ENCODE measurements at regions of chr2 and their contacts with region 1.

Region 1: DNA sequence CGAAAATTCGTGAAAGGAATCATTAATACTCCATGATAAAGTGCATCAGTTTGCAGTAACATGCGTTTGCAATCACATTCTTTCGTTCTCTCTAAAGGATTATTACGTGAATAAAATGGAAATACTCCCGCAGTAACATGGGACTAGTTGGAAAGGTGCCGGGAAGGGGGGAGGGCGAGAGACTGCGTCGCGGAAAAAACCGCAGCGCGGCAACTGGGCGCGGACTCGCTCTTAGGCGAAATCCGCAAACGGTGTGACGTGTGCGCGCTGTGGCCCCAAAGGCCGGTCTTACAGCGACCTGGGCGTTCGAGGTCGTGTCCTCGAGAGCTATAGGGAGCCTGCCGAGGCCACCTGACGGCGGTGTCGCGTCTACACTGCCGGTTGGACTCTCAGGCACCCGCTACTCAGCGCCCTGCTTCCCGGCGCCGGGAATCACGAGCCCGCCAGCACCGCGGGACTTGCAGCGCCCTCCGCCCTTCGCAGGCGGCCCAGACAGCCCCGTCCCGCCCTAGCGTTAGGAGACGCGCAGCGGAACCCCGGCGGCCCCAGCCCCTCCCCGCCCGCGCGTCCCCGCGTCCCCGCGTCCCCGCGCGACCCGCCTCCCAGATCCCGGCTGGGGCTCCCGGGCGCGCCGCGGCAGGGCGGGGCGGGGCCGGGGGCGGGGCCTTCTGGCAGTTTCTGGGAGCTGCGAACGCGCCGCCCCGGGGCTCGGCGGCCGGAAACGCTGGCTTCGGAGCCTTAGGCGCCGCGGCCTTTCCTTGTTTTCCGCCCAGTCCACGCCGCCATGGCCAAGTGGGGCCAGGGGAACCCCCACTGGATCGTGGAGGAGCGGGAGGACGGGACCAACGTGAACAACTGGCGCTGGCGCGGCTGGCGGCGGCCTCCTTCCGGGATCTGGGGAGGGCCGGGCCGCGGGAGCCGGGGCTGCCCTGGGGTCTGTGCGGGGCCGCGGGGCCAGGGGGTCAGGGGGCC is 15.1 kb downstream of the C2orf74 start:
- DNase-seq: peak; percentile 92
- H3K4me3 Mint-ChIP-seq: peak overlapping the region; percentile 92
- H3K27ac Mint-ChIP-seq: peak overlapping the region; percentile 83
- H3K4me1 Mint-ChIP-seq: peaks cover 43% of the 10 kb centered on the region
- H3K27me3 Mint-ChIP-seq: peaks cover 6% of the 10 kb centered on the region

Region 2: GRCh38 chr2:60756191-60757041 is 420.6 kb before region 1 on chr2 and contains the start of gene PAPOLG:
- intact Hi-C with region 1: loop called (anchors 2 kb)
- DNase-seq: peak; percentile 94
- H3K4me3 Mint-ChIP-seq: peak within 1 kb of the TSS; percentile 96
- H3K27ac Mint-ChIP-seq: peak within 1 kb of the TSS; percentile 96
- H3K4me1 Mint-ChIP-seq: peaks cover 29% of the 10 kb centered on the region
- H3K27me3 Mint-ChIP-seq: no peaks in the 10 kb centered on the region
- total RNA-seq, gene PAPOLG: 20.4 and 21.2 TPM in 2 replicates

Region 3: DNA sequence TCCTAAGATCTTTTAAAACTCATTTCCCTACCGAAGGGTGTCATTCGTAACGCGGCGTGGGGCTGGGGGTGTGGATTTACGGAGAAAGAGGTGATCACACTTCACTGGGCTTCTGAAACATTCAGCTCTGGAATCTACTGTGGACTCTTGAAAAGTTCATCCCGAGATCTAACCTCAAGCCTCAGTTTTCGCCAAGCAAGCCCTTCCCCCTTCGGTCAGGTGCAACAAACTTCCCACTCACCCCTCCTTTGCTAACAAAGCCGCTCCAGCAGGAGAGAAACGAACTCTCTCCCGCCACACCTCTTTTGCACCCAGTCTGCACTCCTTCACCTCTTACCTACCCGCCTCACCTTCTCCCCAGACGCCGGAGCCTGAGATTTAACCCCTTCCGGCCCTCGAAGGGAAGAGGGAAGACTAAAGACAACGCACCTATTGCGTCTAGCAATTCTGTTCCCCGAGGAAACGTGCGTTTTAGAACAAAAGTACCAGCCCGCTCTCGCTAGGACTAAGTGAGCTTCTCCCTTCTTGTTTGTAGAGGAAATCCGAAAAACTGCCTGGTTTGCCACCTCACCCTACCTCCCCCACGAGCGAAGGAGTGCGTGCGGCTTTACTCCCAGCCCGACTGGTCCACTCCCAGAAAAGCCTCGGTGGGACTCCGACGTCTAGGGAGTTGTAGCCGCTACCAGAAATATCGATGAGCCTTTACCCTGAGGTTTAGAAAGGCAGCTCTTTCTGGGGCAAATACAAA is 160.1 kb before region 1 on chr2:
- intact Hi-C with region 1: loop called (anchors 1 kb)
- DNase-seq: peak; percentile 69
- H3K4me3 Mint-ChIP-seq: peak overlapping the region; percentile 98
- H3K27ac Mint-ChIP-seq: peak overlapping the region; percentile 98
- H3K4me1 Mint-ChIP-seq: peaks cover 39% of the 10 kb centered on the region
- H3K27me3 Mint-ChIP-seq: no peaks in the 10 kb centered on the region

Region 4: DNA sequence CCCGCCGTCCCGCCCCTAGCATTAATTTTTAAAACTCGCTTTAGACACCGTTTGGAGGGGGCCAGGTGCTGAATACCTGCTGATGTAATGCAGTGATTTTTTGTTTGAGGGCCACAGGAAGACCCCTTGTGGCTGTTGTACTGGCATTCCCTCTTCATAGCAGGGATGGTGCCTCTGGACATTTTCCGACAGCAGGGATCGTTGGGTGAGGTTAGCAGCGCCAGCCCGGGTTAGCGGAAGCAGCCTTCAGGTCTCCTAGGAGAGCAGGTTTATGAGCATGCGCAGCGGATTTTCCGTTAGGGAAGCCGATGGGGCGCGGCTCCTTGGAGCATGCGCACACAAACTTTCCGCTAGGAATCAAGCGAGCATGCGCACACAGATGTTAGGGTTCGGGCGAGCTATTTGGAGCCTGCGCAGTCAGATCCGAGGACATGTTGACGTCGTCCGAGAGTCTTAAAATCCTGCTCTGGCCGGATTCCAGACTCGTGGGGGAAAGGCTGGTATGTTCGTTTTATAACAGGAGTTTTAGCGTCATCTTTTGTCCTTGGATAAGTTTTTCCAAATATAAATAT is 32.3 kb before region 1 on chr2:
- intact Hi-C with region 1: loop called (anchors 1 kb)
- DNase-seq: peak; percentile 92
- H3K4me3 Mint-ChIP-seq: peak overlapping the region; percentile 86
- H3K27ac Mint-ChIP-seq: peak overlapping the region; percentile 88
- H3K4me1 Mint-ChIP-seq: peaks cover 2% of the 10 kb centered on the region
- H3K27me3 Mint-ChIP-seq: no peaks in the 10 kb centered on the region

Region 5: GRCh38 chr2:61204781-61205531 is 27.9 kb after region 1 on chr2:
- intact Hi-C with region 1: no loop called
- DNase-seq: no peak
- H3K4me3 Mint-ChIP-seq: no peak overlapping the region
- H3K27ac Mint-ChIP-seq: no peak overlapping the region
- H3K4me1 Mint-ChIP-seq: no peaks in the 10 kb centered on the region
- H3K27me3 Mint-ChIP-seq: no peaks in the 10 kb centered on the region

Region 6: GRCh38 chr2:61764035-61764800 is 587.2 kb after region 1 on chr2:
- intact Hi-C with region 1: loop called (anchors 1 kb)
- DNase-seq: peak; percentile 96
- H3K4me3 Mint-ChIP-seq: peak overlapping the region; percentile 89
- H3K27ac Mint-ChIP-seq: peak overlapping the region; percentile 94
- H3K4me1 Mint-ChIP-seq: peaks cover 15% of the 10 kb centered on the region
- H3K27me3 Mint-ChIP-seq: no peaks in the 10 kb centered on the region

Measured in activated T-helper 2 cell treated with anti-CD3 and anti-CD28 coated beads, Interferon-gamma antibody, Interleukin-2, Interleukin-4, amounts not matched to agents 10 μg/mL and 5 μg/mL and 100 μg/mL, durations not matched to agents 14 hours and 24 hours and 36 hours (primary cell).